Calu3 (cell line): ENCODE measurements at regions of chr11 and their contacts with region 1.

Region 1: GRCh38 chr11:107041088-107041444 is 22.8 kb upstream of the GUCY1A2 start:
- DNase-seq: no peak
- H3K4me3 Mint-ChIP-seq: no peak overlapping the region
- H3K27ac Mint-ChIP-seq: no peak overlapping the region
- H3K4me1 Mint-ChIP-seq: no peaks in the 10 kb centered on the region
- H3K27me3 Mint-ChIP-seq: no peaks in the 10 kb centered on the region
- CTCF ChIP-seq: no peak

Region 2: GRCh38 chr11:106087815-106088435 is 953.1 kb before region 1 on chr11:
- CTCF ChIA-PET with region 1: no interaction called
- intact Hi-C with region 1: loop called (anchors 2 kb)
- DNase-seq: peak; percentile 20
- H3K4me3 Mint-ChIP-seq: no peak overlapping the region
- H3K27ac Mint-ChIP-seq: no peak overlapping the region
- H3K4me1 Mint-ChIP-seq: peaks cover 14% of the 10 kb centered on the region
- H3K27me3 Mint-ChIP-seq: no peaks in the 10 kb centered on the region
- CTCF ChIP-seq: peak; percentile 55

Region 3: GRCh38 chr11:106156290-106156937 is 884.7 kb before region 1 on chr11:
- CTCF ChIA-PET with region 1: no interaction called
- intact Hi-C with region 1: loop called (anchors 2 kb)
- DNase-seq: peak; percentile 14
- H3K4me3 Mint-ChIP-seq: no peak overlapping the region
- H3K27ac Mint-ChIP-seq: no peak overlapping the region
- H3K4me1 Mint-ChIP-seq: no peaks in the 10 kb centered on the region
- H3K27me3 Mint-ChIP-seq: no peaks in the 10 kb centered on the region
- CTCF ChIP-seq: no peak

Region 4: DNA sequence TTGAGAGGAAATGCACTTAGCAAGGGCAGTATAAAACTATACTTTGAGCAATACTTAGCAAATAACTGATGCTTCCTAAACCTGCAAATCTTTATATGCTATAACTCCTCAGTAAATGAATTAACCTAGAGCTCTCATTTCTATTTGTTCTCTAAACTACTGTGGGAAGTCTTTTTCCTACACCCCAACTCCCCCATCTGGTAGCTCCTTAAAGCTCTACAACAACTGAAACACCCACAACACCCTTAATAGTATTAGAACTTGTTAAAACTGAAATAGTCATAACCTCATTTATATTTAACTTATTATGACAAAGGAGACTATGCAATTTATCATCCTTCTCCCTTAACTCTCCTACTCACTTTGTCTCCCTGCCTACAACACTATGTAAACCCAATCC is 66.2 kb before region 1 on chr11:
- CTCF ChIA-PET with region 1: no interaction called
- intact Hi-C with region 1: no loop called
- DNase-seq: no peak
- H3K4me3 Mint-ChIP-seq: no peak overlapping the region
- H3K27ac Mint-ChIP-seq: no peak overlapping the region
- H3K4me1 Mint-ChIP-seq: no peaks in the 10 kb centered on the region
- H3K27me3 Mint-ChIP-seq: no peaks in the 10 kb centered on the region
- CTCF ChIP-seq: no peak

Region 5: GRCh38 chr11:106988151-106989077 is 52.7 kb before region 1 on chr11:
- CTCF ChIA-PET with region 1: no interaction called
- intact Hi-C with region 1: no loop called
- DNase-seq: no peak
- H3K4me3 Mint-ChIP-seq: no peak overlapping the region
- H3K27ac Mint-ChIP-seq: no peak overlapping the region
- H3K4me1 Mint-ChIP-seq: no peaks in the 10 kb centered on the region
- H3K27me3 Mint-ChIP-seq: no peaks in the 10 kb centered on the region
- CTCF ChIP-seq: no peak

Region 6: DNA sequence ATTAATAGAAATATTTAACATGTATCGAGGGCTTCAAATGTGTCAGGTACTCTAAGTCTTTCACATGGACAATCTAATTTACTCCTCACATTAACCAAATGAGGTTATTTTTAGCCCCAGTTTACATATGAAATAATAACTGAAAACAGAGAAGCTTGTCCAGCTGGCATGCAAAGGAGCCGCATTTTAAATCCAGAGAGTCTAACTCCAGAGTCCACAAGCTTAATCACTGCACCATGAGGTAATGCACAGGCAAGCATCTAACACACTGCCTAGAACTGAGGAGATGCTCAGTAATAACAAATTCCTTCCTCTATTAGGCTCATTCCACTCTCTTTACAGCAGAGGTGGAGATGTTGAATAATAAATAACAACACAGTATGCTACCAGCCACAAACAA is 142.9 kb after region 1 on chr11:
- CTCF ChIA-PET with region 1: no interaction called
- intact Hi-C with region 1: no loop called
- DNase-seq: no peak
- H3K4me3 Mint-ChIP-seq: no peak overlapping the region
- H3K27ac Mint-ChIP-seq: no peak overlapping the region
- H3K4me1 Mint-ChIP-seq: no peaks in the 10 kb centered on the region
- H3K27me3 Mint-ChIP-seq: no peaks in the 10 kb centered on the region
- CTCF ChIP-seq: no peak